Activated CD4-positive, alpha-beta T cell treated with anti-CD3 and anti-CD28 coated beads for 36 hours (primary cell): ENCODE measurements at regions of chr15 and their contacts with region 1.

Region 1: DNA sequence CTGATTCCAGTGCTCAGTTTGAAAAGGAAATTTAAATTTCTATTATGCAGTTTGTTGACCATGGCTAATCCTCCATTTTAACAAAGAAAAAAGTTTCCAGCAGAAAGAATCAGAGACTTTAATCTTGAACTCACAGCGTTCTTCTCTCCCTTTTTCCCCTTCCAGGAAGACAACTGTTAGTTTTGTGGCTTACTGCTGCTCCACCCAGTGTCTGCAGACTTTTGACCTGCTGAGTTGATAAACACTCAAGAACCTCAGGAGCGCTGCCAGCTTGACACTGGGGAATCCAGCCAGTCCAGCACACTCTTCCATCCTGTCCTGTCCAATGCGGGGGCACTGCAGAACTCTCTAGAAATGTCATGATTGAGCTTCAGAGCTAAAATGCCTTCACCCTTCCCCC is 134.6 kb downstream of the LRRC28 start:
- DNase-seq: no peak
- ATAC-seq: no peak
- H3K4me3 Mint-ChIP-seq: no peak overlapping the region
- H3K27ac Mint-ChIP-seq: no peak overlapping the region
- H3K4me1 Mint-ChIP-seq: peaks cover 21% of the 10 kb centered on the region
- H3K27me3 Mint-ChIP-seq: no peaks in the 10 kb centered on the region

Region 2: DNA sequence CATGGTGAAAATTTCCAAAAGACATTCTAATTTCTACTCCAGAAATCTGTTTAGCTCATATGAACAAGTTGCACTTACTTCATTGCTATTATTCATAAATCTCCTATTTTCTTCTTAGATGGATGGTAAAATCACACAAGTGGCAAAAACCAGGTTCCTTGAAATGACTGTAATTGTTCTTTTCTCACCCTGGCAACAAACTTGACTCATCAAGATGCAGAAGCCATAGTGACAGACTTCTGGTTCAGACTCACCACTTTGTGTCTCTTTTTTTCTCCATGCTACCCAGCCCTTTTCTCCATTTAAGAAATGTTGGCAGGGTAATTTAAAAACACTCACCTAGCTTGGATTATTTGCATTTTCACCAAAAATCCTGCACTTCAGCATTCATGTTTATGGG is 52.5 kb before region 1 on chr15:
- CTCF ChIA-PET with region 1: no interaction called
- POLR2A ChIA-PET with region 1: no interaction called
- intact Hi-C with region 1: loop called in 1 of 2 experiments (anchors 5 kb)
- DNase-seq: no peak
- ATAC-seq: peak; percentile 75
- H3K4me3 Mint-ChIP-seq: no peak overlapping the region
- H3K27ac Mint-ChIP-seq: no peak overlapping the region
- H3K4me1 Mint-ChIP-seq: peaks cover 2% of the 10 kb centered on the region
- H3K27me3 Mint-ChIP-seq: no peaks in the 10 kb centered on the region